ENCODE measurements at regions of chr10 and their contacts with region 1.

Region 1: GRCh38 chr10:122413325-122413724 is 38.8 kb downstream of the PLEKHA1 start:
- DNase-seq: no peak
- ATAC-seq: no peak
- H3K4me3 ChIP-seq: no peak overlapping the region
- H3K27ac ChIP-seq: no peak overlapping the region
- H3K4me1 ChIP-seq: no peaks in the 10 kb centered on the region
- H3K27me3 ChIP-seq: no peaks in the 10 kb centered on the region
- CTCF ChIP-seq: no peak
- POLR2A ChIP-seq: no peak
- RAD21 ChIP-seq: no peak

Region 2: DNA sequence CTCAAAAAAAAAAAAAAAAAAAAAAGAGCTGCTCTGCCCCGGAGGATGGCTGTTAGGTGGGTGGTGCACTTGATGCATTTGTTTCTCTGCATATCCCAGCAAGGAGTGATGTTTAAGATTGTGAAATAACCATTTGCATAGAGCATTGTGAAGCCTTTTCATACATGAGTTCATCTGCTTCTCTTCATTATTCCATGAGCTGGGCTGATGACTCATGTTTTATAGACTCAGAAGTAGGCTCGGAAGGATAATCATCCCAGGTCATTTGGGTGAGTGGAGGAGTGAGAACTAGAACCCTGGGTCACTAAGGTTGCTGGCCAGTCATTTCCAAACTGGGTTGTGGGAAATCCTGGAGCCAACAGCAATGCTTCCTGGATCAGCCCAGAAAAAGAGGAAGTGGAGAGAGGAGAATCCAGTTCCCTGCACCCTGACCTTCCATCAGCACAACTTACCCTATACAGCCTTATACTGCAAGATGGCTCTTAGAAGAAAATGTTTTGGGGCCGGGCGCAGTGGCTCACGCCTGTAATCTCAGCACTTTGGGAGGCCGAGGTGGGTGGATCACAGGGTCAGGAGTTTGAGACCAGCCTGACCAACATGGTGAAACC is 379.1 kb before region 1 on chr10:
- CTCF ChIA-PET with region 1: no interaction called
- POLR2A ChIA-PET with region 1: no interaction called
- RAD21 ChIA-PET with region 1: no interaction called
- intact Hi-C with region 1: no loop called
- DNase-seq: no peak
- ATAC-seq: no peak
- H3K4me3 ChIP-seq: no peak overlapping the region
- H3K27ac ChIP-seq: no peak overlapping the region
- H3K4me1 ChIP-seq: peaks cover 0 to 5% of the 10 kb centered on the region in 2 experiments; a peak in 2 of 4 replicates
- H3K27me3 ChIP-seq: peaks cover 4% of the 10 kb centered on the region; the same call in 1 of the 2 replicates
- CTCF ChIP-seq: no peak
- POLR2A ChIP-seq: no peak
- RAD21 ChIP-seq: no peak

Region 3: DNA sequence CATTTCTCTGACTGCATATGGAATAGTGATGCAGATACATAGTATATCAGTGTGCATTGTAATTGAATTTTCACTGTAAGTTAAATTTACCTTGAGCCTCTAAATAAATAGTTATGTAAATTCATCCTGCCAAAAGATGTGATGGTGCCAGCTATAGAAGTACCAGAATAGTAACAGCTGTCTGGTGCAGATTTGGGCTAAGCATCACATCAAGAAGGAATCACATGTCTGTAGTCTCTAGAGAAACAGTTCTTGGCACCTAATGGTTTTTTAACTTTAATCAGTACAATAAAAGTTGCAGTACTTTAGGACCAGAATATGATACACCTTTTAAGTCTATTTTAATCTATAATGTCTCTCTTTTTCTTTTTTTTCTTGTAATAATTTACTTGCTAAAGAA is 21.4 kb before region 1 on chr10:
- CTCF ChIA-PET with region 1: no interaction called
- POLR2A ChIA-PET with region 1: no interaction called
- RAD21 ChIA-PET with region 1: no interaction called
- intact Hi-C with region 1: loop called (anchors 2 kb)
- DNase-seq: no peak
- ATAC-seq: no peak
- H3K4me3 ChIP-seq: no peak overlapping the region
- H3K27ac ChIP-seq: no peak overlapping the region
- H3K4me1 ChIP-seq: no peaks in the 10 kb centered on the region
- H3K27me3 ChIP-seq: no peaks in the 10 kb centered on the region
- CTCF ChIP-seq: no peak
- POLR2A ChIP-seq: no peak
- RAD21 ChIP-seq: no peak